ENCODE measurements at regions of chr4 and their contacts with region 1.

Region 1: DNA sequence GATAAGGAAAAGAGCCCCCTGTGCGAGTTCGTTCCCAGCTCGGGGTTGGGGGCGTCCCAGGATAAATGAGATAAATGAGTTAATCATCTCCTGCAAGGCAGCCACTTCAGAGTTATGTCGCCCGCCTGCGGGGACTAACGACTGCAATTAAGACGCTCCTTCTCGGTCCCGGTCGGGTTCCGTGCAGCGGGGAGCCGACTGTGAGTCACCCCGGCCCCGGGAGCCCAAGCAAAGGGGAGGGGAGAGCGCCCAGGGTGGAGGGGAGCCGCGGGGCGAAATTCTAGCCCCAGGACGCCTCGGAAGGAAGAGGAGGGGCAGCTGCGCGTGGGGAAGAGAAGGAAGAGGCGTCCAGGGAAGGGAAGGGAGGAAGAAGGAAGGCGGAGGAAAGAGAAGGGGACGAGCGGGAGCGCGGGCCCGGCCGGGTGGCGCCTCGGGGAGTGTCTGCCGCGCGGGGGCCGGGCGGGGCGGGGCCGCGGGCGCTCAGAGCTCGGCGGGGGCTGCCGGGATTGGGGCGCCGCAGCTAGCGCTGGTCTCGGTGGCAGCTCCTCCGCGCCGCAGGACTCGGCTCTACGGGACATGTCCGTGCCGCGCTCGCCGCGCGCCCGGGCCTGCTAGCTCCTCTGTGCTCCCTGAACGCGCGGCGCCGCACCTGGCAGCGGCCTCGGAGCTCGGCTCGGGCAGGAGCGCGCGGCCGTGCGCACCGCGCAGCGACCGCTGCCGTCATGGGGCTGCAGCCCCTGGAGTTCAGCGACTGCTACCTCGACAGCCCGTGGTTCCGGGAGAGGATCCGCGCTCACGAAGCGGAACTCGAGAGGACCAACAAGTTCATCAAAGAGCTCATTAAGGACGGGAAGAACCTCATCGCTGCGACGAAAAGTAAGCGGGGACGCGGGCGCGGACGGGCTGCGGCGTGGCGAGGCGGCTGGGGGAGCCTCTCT is at the start of gene ARHGAP10:
- DNase-seq: peak; percentile 72
- H3K4me3 Mint-ChIP-seq: peak within 1 kb of the TSS; percentile 85
- H3K27ac Mint-ChIP-seq: peak within 1 kb of the TSS; percentile 59
- H3K4me1 Mint-ChIP-seq: peaks cover 34% of the 10 kb centered on the region
- H3K27me3 Mint-ChIP-seq: peaks cover 8% of the 10 kb centered on the region
- total RNA-seq, gene ARHGAP10: 3.6 to 3.8 TPM

Region 2: DNA sequence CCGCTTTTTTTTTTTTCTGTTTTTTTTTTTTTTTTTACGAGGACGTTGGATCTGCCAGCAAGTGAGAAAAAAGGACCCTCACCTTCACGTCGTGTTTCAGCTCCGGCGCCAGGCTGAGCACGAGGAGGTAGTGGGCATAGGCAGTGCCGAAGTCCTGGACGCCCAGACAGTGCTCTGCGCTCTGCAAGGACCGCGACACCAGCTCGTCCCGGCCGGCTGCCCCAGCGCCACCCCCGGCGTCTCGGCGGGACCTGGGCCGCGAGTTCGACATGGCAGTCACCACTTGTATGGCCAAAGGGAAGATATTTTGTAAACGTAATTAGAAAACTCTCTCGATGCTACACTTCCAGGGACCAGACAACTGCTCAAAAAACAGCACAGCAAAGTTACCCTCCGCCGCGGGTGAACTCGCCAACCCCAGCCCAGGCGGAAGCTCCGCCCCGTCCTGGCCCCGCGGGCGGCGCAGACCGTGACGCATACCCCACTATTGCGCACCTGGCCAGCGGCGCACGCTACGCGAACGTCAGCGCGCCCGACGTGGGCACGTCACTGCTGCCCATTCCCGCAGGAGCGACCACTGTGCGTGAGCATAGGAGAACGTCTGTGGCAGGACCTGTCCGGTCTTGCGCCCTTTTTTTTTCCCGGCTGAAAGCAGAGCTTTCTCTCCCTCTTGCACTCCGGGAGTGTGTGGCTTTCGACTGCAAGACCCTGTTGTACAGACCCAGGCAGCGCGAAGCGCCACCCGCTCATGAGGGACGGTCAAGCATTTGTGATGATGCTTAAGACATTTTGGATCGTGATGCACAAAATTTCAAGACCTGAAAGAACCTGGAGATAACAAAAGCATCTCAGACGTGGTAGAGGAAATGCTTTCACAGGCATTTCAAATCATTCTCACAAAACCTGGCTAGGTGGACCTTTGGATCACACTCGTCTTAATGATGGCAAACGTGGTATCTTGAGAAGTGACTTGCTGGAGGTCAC is 47.8 kb before region 1 on chr4 and contains the start of gene PRMT9:
- CTCF ChIA-PET with region 1: interaction called, 8 read pairs
- intact Hi-C with region 1: loop called (anchors 1 kb)
- DNase-seq: peak; percentile 91
- H3K4me3 Mint-ChIP-seq: peak within 1 kb of the TSS; percentile 90
- H3K27ac Mint-ChIP-seq: peak within 1 kb of the TSS; percentile 91
- H3K4me1 Mint-ChIP-seq: peaks cover 19% of the 10 kb centered on the region
- H3K27me3 Mint-ChIP-seq: no peaks in the 10 kb centered on the region
- total RNA-seq, gene PRMT9: 7.3 to 8.2 TPM

Region 3: GRCh38 chr4:147793569-147794313 is 61.9 kb after region 1 on chr4:
- CTCF ChIA-PET with region 1: no interaction called
- intact Hi-C with region 1: loop called (anchors 5 kb)
- DNase-seq: no peak
- H3K4me3 Mint-ChIP-seq: no peak overlapping the region
- H3K27ac Mint-ChIP-seq: no peak overlapping the region
- H3K4me1 Mint-ChIP-seq: peaks cover 31% of the 10 kb centered on the region
- H3K27me3 Mint-ChIP-seq: no peaks in the 10 kb centered on the region

Region 4: GRCh38 chr4:147799986-147800555 is 68.2 kb after region 1 on chr4:
- CTCF ChIA-PET with region 1: no interaction called
- intact Hi-C with region 1: loop called (anchors 1 kb)
- DNase-seq: peak; percentile 68
- H3K4me3 Mint-ChIP-seq: no peak overlapping the region
- H3K27ac Mint-ChIP-seq: no peak overlapping the region
- H3K4me1 Mint-ChIP-seq: peaks cover 13% of the 10 kb centered on the region
- H3K27me3 Mint-ChIP-seq: peaks cover 2% of the 10 kb centered on the region

Measured in activated naive CD4-positive, alpha-beta T cell treated with anti-CD3 and anti-CD28 coated beads for 36 hours (primary cell).